ENCODE measurements at regions of chr3 and their contacts with region 1.

Region 1: GRCh38 chr3:59978979-59979378 is 929.2 kb upstream of the CFAP20DC start:
- DNase-seq: peak; percentile 38
- H3K4me3 Mint-ChIP-seq: peak overlapping the region; percentile 64
- H3K27ac Mint-ChIP-seq: peak overlapping the region; percentile 93
- H3K4me1 Mint-ChIP-seq: peaks cover 45% of the 10 kb centered on the region
- H3K27me3 Mint-ChIP-seq: no peaks in the 10 kb centered on the region

Region 2: GRCh38 chr3:59580996-59581395 is 398.0 kb before region 1 on chr3:
- intact Hi-C with region 1: no loop called
- DNase-seq: no peak
- H3K4me3 Mint-ChIP-seq: no peak overlapping the region
- H3K27ac Mint-ChIP-seq: no peak overlapping the region
- H3K4me1 Mint-ChIP-seq: peaks cover 4% of the 10 kb centered on the region
- H3K27me3 Mint-ChIP-seq: no peaks in the 10 kb centered on the region

Region 3: DNA sequence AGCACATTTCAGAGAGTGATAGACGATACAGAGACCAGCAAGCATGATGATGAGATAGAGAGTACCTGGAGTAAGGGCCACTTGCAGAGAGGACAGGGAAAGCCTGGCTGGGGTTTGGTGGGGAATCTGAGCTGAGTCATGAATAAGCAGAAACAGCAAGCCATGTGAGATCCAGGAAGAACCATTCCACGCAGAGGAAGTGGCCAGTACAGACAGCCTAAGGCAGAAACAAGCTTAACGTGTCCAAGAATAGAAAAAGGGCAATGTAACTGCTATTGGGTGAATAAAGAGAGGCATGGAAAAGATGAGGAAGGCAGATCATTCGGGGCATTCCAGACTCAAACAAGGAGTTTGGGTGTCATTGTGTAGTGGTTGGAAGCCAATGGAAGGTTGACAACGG is 112.9 kb before region 1 on chr3:
- intact Hi-C with region 1: loop called (anchors 1 kb)
- DNase-seq: no peak
- H3K4me3 Mint-ChIP-seq: no peak overlapping the region
- H3K27ac Mint-ChIP-seq: no peak overlapping the region
- H3K4me1 Mint-ChIP-seq: peaks cover 40% of the 10 kb centered on the region
- H3K27me3 Mint-ChIP-seq: no peaks in the 10 kb centered on the region

Region 4: GRCh38 chr3:59957150-59957549 is 21.8 kb before region 1 on chr3:
- intact Hi-C with region 1: loop called (anchors 2 kb)
- DNase-seq: no peak
- H3K4me3 Mint-ChIP-seq: no peak overlapping the region
- H3K27ac Mint-ChIP-seq: no peak overlapping the region
- H3K4me1 Mint-ChIP-seq: peaks cover 33% of the 10 kb centered on the region
- H3K27me3 Mint-ChIP-seq: no peaks in the 10 kb centered on the region

Region 5: GRCh38 chr3:60010781-60011180 is 31.8 kb after region 1 on chr3:
- intact Hi-C with region 1: loop called (anchors 1 kb)
- DNase-seq: peak; percentile 73
- H3K4me3 Mint-ChIP-seq: peak overlapping the region; percentile 74
- H3K27ac Mint-ChIP-seq: peak overlapping the region; percentile 91
- H3K4me1 Mint-ChIP-seq: peaks cover 76% of the 10 kb centered on the region
- H3K27me3 Mint-ChIP-seq: peaks cover 2% of the 10 kb centered on the region

Region 6: DNA sequence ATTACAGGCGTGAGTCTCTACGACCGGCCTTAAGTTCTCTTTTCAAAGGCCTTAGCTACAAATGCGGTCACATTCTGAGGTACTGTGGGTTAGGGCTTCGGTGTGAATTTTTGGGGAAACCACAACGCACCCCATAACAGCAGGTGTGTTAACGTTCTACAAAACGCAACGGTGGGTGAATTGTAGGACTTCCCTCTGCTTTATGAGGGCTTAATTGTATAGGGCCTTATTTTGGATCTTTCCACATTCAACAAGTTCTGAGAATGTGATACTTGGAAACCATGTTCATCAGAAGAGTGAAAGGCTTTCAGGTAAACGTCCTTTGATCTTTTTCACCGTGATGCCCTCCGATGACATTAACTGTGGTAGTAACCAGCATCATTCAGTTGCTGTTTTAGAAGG is 69.5 kb after region 1 on chr3:
- intact Hi-C with region 1: loop called (anchors 1 kb)
- DNase-seq: peak; percentile 62
- H3K4me3 Mint-ChIP-seq: peak overlapping the region; percentile 74
- H3K27ac Mint-ChIP-seq: peak overlapping the region; percentile 93
- H3K4me1 Mint-ChIP-seq: peaks cover 88% of the 10 kb centered on the region
- H3K27me3 Mint-ChIP-seq: no peaks in the 10 kb centered on the region

Region 7: DNA sequence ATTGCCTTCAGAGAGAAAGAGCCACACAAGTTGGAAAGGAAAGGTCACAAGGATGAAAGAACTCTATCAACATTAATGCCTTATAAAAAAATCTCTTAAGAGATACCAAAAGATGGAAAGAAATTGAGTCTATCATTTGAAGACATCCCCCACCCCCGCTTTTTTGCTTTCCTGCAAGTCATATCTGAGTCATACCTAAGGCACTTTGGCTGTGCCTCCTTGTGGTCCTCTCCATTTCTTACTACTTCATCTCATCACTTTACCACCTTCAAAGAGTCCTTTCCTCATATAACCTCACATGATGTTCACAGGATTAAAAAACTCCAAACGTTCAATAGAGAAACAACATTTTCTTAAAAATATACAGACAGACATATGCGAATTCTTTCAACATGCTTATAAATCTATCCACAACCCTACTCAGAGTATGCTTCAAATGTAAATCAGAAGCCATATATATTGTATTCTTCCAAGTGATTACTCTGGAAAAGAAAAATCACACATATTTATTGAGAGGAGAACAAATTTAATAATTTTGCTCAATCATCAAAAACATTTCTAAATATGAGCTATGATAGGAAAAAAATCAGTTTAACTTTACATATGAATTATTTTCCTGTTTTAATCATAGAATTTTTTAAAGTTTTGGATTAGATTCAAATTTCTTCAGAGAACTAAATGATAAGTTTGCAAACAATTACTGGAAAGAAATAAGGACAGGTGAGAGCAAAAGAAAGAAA is 74.7 kb after region 1 on chr3:
- intact Hi-C with region 1: loop called (anchors 1 kb)
- DNase-seq: no peak
- H3K4me3 Mint-ChIP-seq: peak overlapping the region; percentile 21
- H3K27ac Mint-ChIP-seq: peak overlapping the region; percentile 75
- H3K4me1 Mint-ChIP-seq: peaks cover 86% of the 10 kb centered on the region
- H3K27me3 Mint-ChIP-seq: no peaks in the 10 kb centered on the region

Measured in activated T-helper 1 cell treated with anti-CD3 and anti-CD28 coated beads, Interleukin-12 subunit alpha, Interleukin-12 subunit beta, Interleukin-2, Interleukin-4 antibody, amounts not matched to agents 30 ng/mL and 10 ng/mL and 1 ng/mL, durations not matched to agents 14 hours and 24 hours and 36 hours (primary cell).